ENCODE measurements at regions of chr5 and their contacts with region 1.

Region 1: DNA sequence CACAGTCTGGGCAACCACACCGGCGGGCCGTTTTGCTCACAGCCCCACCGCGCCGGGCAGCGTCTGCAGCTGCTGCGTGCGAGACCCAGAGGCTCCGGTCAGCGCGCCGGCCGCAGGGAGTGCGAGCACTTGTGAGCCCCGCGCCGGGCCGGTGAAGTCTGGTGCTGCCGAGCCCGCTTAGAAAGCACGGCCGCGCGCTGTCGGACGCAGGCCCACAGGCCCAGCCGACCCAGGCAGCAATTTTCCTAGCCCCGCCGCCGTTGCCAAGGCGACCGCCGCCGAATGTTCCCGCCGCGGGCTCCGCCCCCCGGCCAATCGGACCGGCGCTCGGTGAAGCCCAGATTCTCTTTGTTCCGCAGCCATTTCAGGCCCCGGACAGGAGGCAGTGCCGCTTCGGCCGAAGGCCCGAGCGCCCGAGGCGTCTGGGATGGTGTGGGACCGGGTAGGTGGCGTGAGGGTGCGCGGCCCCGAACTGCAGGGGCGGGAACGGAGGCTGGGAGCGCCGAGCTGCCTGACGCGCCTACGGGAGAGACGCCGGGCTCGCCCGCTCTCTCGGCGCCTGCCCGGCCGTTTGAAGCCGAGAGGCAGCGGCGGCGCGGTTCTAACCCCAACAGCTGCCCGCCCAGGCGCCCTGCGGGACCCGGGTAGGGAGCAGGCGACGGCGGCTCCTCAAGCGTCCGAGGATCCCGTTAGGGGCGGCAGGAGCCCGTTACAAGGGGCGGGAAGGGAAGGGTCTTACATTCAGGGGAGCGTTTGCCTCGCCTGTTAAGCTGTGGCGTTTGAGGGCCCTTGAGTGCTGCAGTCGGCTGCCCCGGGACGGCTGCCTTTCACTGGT is at the start of gene TNPO1:
- DNase-seq: peak; percentile 86 to 91 (median 88)
- ATAC-seq: peak; percentile 93
- H3K4me3 ChIP-seq: peak within 1 kb of the TSS; percentile 71
- H3K27ac ChIP-seq: peak within 1 kb of the TSS; percentile 84
- H3K4me1 ChIP-seq: peaks cover 6 to 15% of the 10 kb centered on the region in 2 experiments; a peak in 3 of 5 replicates
- H3K27me3 ChIP-seq: no peaks in the 10 kb centered on the region
- CTCF ChIP-seq: no peak
- EP300 ChIP-seq: no peak
- POLR2A ChIP-seq: peak; percentile 81
- RAD21 ChIP-seq: no peak; a peak in 1 of 4 replicates
- polyA plus RNA-seq, gene TNPO1: 20.8 to 50.0 TPM

Region 2: GRCh38 chr5:72597456-72597948 is 219.0 kb before region 1 on chr5:
- CTCF ChIA-PET with region 1: no interaction called
- POLR2A ChIA-PET with region 1: no interaction called
- in situ Hi-C with region 1: no loop called
- intact Hi-C with region 1: loop called (anchors 5 kb)
- DNase-seq: peak; percentile 78 to 94 (median 84)
- ATAC-seq: peak; percentile 98
- H3K4me3 ChIP-seq: no peak overlapping the region
- H3K27ac ChIP-seq: peak overlapping the region; percentile 93
- H3K4me1 ChIP-seq: peaks cover 10 to 35% of the 10 kb centered on the region in 2 experiments
- H3K27me3 ChIP-seq: no peaks in the 10 kb centered on the region
- CTCF ChIP-seq: no peak
- EP300 ChIP-seq: peak; percentile 97
- POLR2A ChIP-seq: no peak
- RAD21 ChIP-seq: peak in 1 of 2 experiments; percentile 4; a peak in 2 of 4 replicates

Region 3: GRCh38 chr5:72611118-72611730 is 205.3 kb before region 1 on chr5:
- CTCF ChIA-PET with region 1: no interaction called
- POLR2A ChIA-PET with region 1: no interaction called
- in situ Hi-C with region 1: no loop called
- intact Hi-C with region 1: loop called (anchors 1 kb)
- DNase-seq: peak; percentile 58 to 83 (median 67)
- ATAC-seq: peak; percentile 100
- H3K4me3 ChIP-seq: no peak overlapping the region
- H3K27ac ChIP-seq: no peak overlapping the region
- H3K4me1 ChIP-seq: no peaks in the 10 kb centered on the region
- H3K27me3 ChIP-seq: no peaks in the 10 kb centered on the region
- CTCF ChIP-seq: peak; percentile 81 to 94 (median 89)
- EP300 ChIP-seq: no peak
- POLR2A ChIP-seq: no peak
- RAD21 ChIP-seq: peak; percentile 76 to 89

Region 4: GRCh38 chr5:72829707-72830106 is 13.2 kb after region 1 on chr5:
- CTCF ChIA-PET with region 1: no interaction called
- POLR2A ChIA-PET with region 1: interaction called, 29 read pairs
- in situ Hi-C with region 1: no loop called
- intact Hi-C with region 1: no loop called
- DNase-seq: no peak
- ATAC-seq: no peak
- H3K4me3 ChIP-seq: no peak overlapping the region
- H3K27ac ChIP-seq: no peak overlapping the region
- H3K4me1 ChIP-seq: no peaks in the 10 kb centered on the region
- H3K27me3 ChIP-seq: no peaks in the 10 kb centered on the region
- CTCF ChIP-seq: no peak
- EP300 ChIP-seq: no peak
- POLR2A ChIP-seq: no peak
- RAD21 ChIP-seq: no peak

Region 5: DNA sequence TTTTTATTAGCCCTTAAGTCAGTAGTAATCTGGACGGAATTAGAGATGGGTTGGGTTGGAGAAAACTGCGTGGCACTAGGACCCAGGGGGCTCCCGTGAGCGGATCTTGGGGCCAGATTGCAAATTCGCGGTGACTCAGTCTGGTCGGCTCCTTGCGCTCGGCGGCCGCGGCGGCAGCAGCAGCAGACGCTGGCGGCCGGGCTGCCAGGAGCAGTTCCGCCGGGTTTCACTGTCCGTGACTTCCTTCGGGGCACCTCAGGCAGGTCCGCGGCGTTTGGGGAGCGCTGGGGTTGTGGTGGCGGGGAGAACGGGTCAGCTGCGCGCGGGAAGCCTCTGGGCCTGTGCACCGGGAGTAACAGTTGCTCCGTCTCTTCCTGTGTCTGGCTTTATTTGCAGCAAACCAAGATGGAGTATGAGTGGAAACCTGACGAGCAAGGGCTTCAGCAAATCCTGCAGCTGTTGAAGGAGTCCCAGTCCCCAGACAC is 31.5 kb after region 1 on chr5:
- CTCF ChIA-PET with region 1: no interaction called
- POLR2A ChIA-PET with region 1: interaction called, 3 read pairs
- in situ Hi-C with region 1: no loop called
- intact Hi-C with region 1: loop called (anchors 2 kb)
- DNase-seq: peak; percentile 73 to 93 (median 80)
- ATAC-seq: peak; percentile 89
- H3K4me3 ChIP-seq: peak overlapping the region; percentile 72
- H3K27ac ChIP-seq: peak overlapping the region; percentile 94
- H3K4me1 ChIP-seq: peaks cover 0 to 13% of the 10 kb centered on the region in 2 experiments; a peak in 3 of 5 replicates
- H3K27me3 ChIP-seq: no peaks in the 10 kb centered on the region
- CTCF ChIP-seq: no peak
- EP300 ChIP-seq: peak; percentile 61
- POLR2A ChIP-seq: peak; percentile 99
- RAD21 ChIP-seq: no peak

Measured in K562 (cell line).